ENCODE measurements at regions of chr1 and their contacts with region 1.

Region 1: GRCh38 chr1:3491291-3492246 is 37.1 kb downstream of the ARHGEF16 start:
- DNase-seq: peak; percentile 60 to 89 (median 73)
- H3K4me3 ChIP-seq: peak overlapping the region in 31 of 59 donors; percentile 8 to 51 (median 31)
- H3K27ac ChIP-seq: no peak overlapping the region
- H3K27me3 ChIP-seq: no peaks in the 10 kb centered on the region
- CTCF ChIP-seq: peak; percentile 96 to 100 (median 100)

Region 2: GRCh38 chr1:3275471-3276340 is 215.9 kb before region 1 on chr1:
- intact Hi-C with region 1: no loop called
- DNase-seq: no peak
- H3K4me3 ChIP-seq: no peak overlapping the region
- H3K27ac ChIP-seq: peak overlapping the region in 22 of 59 donors; percentile 1 to 72 (median 36)
- H3K27me3 ChIP-seq: peaks cover 0 to 16% (median 0%) of the 10 kb centered on the region in 45 donors
- CTCF ChIP-seq: no peak

Region 3: GRCh38 chr1:3453203-3453761 is 38.3 kb before region 1 on chr1:
- intact Hi-C with region 1: no loop called
- DNase-seq: peak; percentile 66 to 88 (median 74)
- H3K4me3 ChIP-seq: no peak overlapping the region
- H3K27ac ChIP-seq: peak overlapping the region in 2 of 59 donors; percentile 36 to 56
- H3K27me3 ChIP-seq: peaks cover 0 to 14% (median 0%) of the 10 kb centered on the region in 45 donors
- CTCF ChIP-seq: peak; percentile 66 to 99 (median 96)

Region 4: DNA sequence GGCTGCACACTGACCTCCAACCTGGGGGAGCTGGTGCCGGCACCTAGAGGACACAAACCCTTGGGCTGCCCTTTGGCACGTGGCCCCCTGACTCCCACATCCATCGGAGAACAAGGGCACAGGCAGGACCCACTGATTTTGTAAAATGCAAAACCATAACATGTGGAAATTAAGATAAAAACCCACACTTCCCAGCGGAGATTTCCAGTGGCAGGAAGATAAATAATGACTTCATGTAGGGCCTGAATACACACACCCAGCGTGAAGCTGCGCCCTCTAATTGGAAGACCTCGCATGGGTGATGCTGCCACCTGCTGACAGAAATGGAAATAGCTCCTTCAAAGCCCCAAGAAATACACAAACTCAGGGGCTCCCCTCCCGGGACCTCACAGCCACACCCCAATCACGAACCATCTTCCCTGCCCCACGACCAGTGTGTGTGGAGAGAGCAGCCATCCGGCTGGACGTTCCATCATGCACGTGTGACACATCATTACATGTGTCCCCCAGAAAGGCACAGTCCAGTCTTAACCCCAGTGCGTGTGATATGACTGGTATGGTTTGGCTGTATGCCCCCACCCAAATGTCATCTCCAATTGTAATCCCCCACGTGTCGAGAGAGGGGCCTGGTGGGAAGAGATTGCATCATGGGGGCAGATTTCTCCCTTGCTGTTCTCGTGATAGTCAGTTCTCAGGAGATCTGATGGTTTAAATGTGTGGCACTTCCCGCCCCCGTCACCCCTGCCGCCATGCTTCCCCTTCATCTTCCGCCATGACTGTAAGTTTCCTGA is 127.5 kb after region 1 on chr1:
- intact Hi-C with region 1: loop called (anchors 1 to 2 kb)
- DNase-seq: peak in 8 of 10 donors; percentile 37 to 84 (median 74)
- H3K4me3 ChIP-seq: no peak overlapping the region
- H3K27ac ChIP-seq: peak overlapping the region in 1 of 59 donors; percentile 71
- H3K27me3 ChIP-seq: no peaks in the 10 kb centered on the region
- CTCF ChIP-seq: peak; percentile 76 to 97 (median 93)

Region 5: GRCh38 chr1:3624200-3625136 is 132.9 kb after region 1 on chr1 and contains the start of gene TPRG1L:
- intact Hi-C with region 1: loop called (anchors 1 to 2 kb)
- DNase-seq: peak; percentile 97 to 100 (median 98)
- H3K4me3 ChIP-seq: peak within 1 kb of the TSS; percentile 72 to 100 (median 97)
- H3K27ac ChIP-seq: peak within 1 kb of the TSS in 53 of 59 donors; percentile 36 to 93 (median 81)
- H3K27me3 ChIP-seq: no peaks in the 10 kb centered on the region
- CTCF ChIP-seq: peak in 18 of 56 donors; percentile 7 to 40 (median 20)
- total RNA-seq, gene TPRG1L: 52.0 to 163 (median 121) TPM

Region 6: DNA sequence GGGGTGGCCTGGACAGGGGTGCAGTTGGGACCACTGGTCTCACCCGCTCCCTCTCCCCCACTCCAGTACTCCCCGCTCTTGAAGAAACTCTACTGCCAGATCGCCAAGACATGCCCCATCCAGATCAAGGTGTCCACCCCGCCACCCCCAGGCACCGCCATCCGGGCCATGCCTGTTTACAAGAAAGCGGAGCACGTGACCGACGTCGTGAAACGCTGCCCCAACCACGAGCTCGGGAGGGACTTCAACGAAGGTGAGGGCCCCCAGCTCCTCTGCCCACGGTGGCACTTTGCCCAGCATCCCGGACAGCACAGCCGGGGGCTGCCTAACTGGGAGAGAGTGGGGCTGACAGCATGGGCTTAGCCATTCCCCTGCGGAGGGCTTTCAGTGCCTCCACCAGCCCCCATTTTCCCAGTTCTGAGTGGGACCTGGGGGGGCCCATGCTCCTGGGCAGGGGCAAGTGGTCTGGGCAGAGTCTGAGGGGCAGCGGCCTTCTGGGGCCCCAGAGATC is 230.4 kb after region 1 on chr1:
- intact Hi-C with region 1: loop called (anchors 5 kb)
- DNase-seq: no peak
- H3K4me3 ChIP-seq: no peak overlapping the region
- H3K27ac ChIP-seq: no peak overlapping the region
- H3K27me3 ChIP-seq: peaks cover 0 to 6% (median 0%) of the 10 kb centered on the region in 45 donors
- CTCF ChIP-seq: no peak

Region 7: GRCh38 chr1:4018466-4019146 is 527.0 kb after region 1 on chr1:
- intact Hi-C with region 1: no loop called
- DNase-seq: peak in 6 of 10 donors; percentile 35 to 77 (median 48)
- H3K4me3 ChIP-seq: peak overlapping the region in 7 of 59 donors; percentile 3 to 24 (median 12)
- H3K27ac ChIP-seq: peak overlapping the region in 33 of 59 donors; percentile 8 to 77 (median 45)
- H3K27me3 ChIP-seq: peaks cover 0 to 8% (median 0%) of the 10 kb centered on the region in 45 donors
- CTCF ChIP-seq: no peak